K562 (cell line): ENCODE measurements at regions of chr3 and their contacts with region 1.

Region 1: GRCh38 chr3:47420511-47421484 is 40.0 kb downstream of the PTPN23 start:
- DNase-seq: peak; percentile 90 to 95 (median 91)
- ATAC-seq: peak; percentile 95
- H3K4me3 ChIP-seq: no peak overlapping the region
- H3K27ac ChIP-seq: peak overlapping the region; percentile 61
- H3K4me1 ChIP-seq: peaks cover 6 to 50% of the 10 kb centered on the region in 2 experiments; a peak in 3 of 5 replicates
- H3K27me3 ChIP-seq: no peaks in the 10 kb centered on the region
- CTCF ChIP-seq: peak; percentile 95 to 98 (median 97)
- EP300 ChIP-seq: 0 out of 2 replicates have a peak, but pooled peaks have one; percentile 33
- POLR2A ChIP-seq: 0 out of 2 replicates have a peak, but pooled peaks have one; percentile 34
- RAD21 ChIP-seq: peak; percentile 93 to 95

Region 2: GRCh38 chr3:47513125-47513929 is 92.5 kb after region 1 on chr3 and contains the start of gene ELP6:
- CTCF ChIA-PET with region 1: interaction called, 3 read pairs
- POLR2A ChIA-PET with region 1: interaction called, 4 read pairs
- in situ Hi-C with region 1: loop called (anchors 5 kb)
- intact Hi-C with region 1: loop called (anchors 1 kb)
- DNase-seq: peak; percentile 97 to 99 (median 98)
- ATAC-seq: peak; percentile 97
- H3K4me3 ChIP-seq: peak within 1 kb of the TSS; percentile 58
- H3K27ac ChIP-seq: peak within 1 kb of the TSS; percentile 95
- H3K4me1 ChIP-seq: peaks cover 30 to 37% of the 10 kb centered on the region in 2 experiments
- H3K27me3 ChIP-seq: no peaks in the 10 kb centered on the region
- CTCF ChIP-seq: peak; percentile 83 to 95 (median 92)
- EP300 ChIP-seq: peak; percentile 40
- POLR2A ChIP-seq: peak; percentile 97
- RAD21 ChIP-seq: peak; percentile 83 to 94
- polyA plus RNA-seq, gene ELP6: 86.1 to 136 TPM

Region 3: DNA sequence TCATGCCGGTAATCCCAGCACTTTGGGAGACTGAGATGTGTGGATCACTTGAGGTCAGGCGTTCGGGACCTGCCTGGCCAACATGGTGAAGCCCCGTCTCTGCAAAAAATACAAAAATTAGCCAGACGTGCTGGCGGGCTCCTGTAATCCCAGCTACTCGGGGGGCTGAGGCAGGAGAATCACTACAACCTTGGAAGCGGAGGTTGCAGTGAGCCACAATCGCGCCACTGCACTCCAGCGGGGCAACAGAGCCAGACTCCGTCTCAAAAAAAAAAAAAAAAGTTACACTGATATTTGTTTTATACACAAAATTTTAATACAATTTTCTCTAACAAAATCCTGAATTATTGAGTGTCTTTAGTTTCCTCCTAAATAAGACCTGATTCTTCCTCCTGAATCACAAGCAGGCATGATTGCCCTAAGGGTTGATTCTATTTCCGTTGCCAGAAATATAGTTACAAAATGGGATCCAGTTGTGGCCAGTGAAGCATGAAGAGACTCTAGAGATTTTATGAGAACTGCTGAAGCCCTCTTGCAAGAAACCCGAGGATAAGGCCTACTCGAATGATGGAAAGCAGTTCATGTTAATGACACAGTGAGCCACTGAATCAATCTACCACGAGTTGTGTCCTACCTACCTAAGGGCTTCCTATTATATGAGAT is 370.5 kb after region 1 on chr3:
- CTCF ChIA-PET with region 1: interaction called, 17 read pairs
- POLR2A ChIA-PET with region 1: interaction called, 3 read pairs
- in situ Hi-C with region 1: loop called (anchors 5 kb)
- intact Hi-C with region 1: loop called (anchors 1 kb)
- DNase-seq: no peak
- ATAC-seq: no peak
- H3K4me3 ChIP-seq: no peak overlapping the region
- H3K27ac ChIP-seq: no peak overlapping the region
- H3K4me1 ChIP-seq: peaks cover 0 to 6% of the 10 kb centered on the region in 2 experiments; a peak in 2 of 5 replicates
- H3K27me3 ChIP-seq: no peaks in the 10 kb centered on the region
- CTCF ChIP-seq: no peak
- EP300 ChIP-seq: no peak
- POLR2A ChIP-seq: no peak
- RAD21 ChIP-seq: no peak